ENCODE measurements at regions of chr15 and their contacts with region 1.

Region 1: DNA sequence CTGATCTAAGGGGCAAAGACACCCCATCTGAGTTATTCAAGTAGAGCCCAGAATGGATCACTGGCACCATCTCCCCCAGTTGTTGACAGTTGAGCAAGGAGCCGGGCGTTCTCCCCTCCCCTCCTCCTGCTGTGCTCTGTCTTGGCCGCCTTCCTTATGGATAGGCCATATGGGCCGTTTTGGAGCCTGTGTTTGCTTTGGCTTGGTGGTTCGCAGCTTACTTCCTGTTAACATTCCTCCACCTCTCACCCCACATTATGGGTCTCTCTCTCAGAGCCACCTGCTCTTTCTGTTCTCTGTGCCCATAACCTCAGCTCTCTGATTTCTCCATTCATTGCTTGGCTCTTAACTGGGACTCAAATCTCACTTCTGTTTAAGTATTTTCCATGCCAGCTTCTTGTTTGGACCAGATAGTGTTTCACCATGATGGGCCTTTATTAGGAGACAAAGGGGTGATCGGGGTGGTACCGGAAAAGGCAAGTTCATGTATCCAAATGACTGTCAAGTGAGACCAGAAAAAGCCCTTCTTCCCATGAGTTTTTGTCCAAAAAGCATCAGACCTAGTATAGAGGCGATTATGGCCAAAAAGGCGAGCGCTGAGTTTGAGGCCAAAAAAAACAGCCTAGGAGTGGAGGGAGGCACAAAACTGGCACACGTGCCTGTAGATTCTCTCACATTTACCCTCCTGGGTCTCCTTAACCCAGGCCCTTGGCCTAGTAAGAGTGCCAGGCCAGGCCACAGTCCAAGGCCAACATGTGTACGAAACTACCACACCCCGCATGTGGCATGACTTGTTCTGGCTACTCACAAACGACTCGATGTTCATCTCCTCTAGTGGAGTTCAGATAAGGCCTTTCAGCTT is 62.6 kb downstream of the DUT start:
- DNase-seq: no peak
- H3K4me3 ChIP-seq: no peak overlapping the region
- H3K27ac ChIP-seq: no peak overlapping the region
- H3K27me3 ChIP-seq: no peaks in the 10 kb centered on the region
- CTCF ChIP-seq: no peak

Region 2: DNA sequence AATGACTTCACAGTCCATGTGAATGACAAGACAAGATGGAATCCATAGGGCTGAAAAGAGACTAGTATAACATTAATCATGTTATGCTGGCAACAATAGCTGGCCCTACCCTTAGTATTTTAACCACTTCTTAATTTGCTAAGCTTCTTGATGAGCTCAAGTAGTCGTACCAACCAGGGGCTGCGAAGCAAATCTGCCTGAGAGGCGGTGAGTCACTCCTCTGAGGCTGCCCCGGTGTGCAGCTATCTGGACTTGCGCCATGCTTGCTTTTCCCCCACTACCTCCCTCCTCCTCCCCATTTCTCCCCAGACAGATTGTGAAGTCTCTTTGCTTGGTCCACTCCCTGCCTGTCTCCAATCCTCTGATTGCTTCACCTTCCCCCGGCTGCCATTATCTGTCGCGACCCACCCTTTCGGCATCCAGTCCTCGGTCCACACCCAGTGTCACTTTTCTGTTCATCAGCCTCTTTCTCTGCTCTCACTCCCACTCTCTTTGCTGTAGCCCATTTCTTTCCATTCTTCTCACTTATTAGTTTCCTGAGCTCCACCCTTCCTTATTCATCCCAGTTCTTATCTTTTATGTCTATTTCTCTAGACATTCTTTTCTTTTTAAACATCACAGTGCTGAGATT is 19.9 kb before region 1 on chr15:
- CTCF ChIA-PET with region 1: interaction called, 11 read pairs
- POLR2A ChIA-PET with region 1: no interaction called
- DNase-seq: no peak
- H3K4me3 ChIP-seq: no peak overlapping the region
- H3K27ac ChIP-seq: no peak overlapping the region
- H3K27me3 ChIP-seq: no peaks in the 10 kb centered on the region
- CTCF ChIP-seq: no peak

Region 3: DNA sequence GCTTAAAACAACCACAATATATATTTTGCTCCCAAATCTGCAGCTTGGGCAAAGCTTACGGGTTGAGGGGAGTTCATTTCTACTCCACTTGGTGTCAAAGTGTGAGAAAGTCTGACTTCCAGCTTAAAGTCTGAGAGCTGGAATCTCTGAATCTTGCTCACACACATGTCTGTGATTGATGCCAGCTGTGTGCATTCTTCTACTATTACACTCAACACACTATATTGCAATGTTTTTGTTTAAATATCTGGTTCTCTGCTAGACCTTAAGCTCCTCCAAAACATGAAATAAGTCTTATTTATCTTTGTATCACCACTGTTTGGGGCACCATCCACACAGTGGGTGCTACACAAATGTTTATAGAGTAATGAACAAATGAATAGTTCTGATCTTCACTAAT is 689.1 kb after region 1 on chr15:
- CTCF ChIA-PET with region 1: no interaction called
- POLR2A ChIA-PET with region 1: no interaction called
- DNase-seq: peak; percentile 84
- H3K4me3 ChIP-seq: no peak overlapping the region
- H3K27ac ChIP-seq: peak overlapping the region; percentile 43
- H3K27me3 ChIP-seq: no peaks in the 10 kb centered on the region
- CTCF ChIP-seq: no peak

Measured in AG04450 (cell line).